ENCODE measurements at regions of chr2 and their contacts with region 1.

Region 1: GRCh38 chr2:221517696-221518151 is 54.4 kb downstream of the EPHA4 start:
- DNase-seq: peak; percentile 65 to 94 (median 71)
- H3K4me3 ChIP-seq: peak overlapping the region; percentile 47
- H3K4me3 Mint-ChIP-seq: no peak overlapping the region
- H3K27ac ChIP-seq: peak overlapping the region; percentile 97
- H3K27ac Mint-ChIP-seq: no peak overlapping the region
- H3K4me1 ChIP-seq: peaks cover 48% of the 10 kb centered on the region
- H3K4me1 Mint-ChIP-seq: peaks cover 20 to 30% (median 28%) of the 10 kb centered on the region in 3 donors
- H3K27me3 ChIP-seq: no peaks in the 10 kb centered on the region
- H3K27me3 Mint-ChIP-seq: no peaks in the 10 kb centered on the region

Region 2: DNA sequence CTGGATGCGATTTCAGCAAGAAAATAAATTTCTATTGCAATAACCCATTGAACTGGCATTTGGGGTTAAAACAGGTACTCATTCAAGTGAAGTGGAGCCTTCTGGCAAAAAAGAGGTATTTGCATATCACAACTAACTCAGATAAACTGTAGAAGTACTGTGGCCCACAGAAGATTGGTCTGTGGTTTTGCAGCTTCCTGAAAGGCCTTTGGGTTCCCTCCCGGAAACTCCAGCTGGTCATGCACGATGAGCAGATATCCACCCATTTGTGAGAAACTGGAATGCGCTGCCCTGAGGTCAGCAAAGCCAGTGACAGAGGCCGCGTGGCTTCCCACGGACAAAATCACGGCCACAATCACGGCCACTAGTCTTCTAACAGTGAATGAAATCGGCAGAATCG is 51.9 kb before region 1 on chr2:
- CTCF ChIA-PET with region 1: interaction called, 5 read pairs
- POLR2A ChIA-PET with region 1: interaction called, 10 read pairs
- DNase-seq: no peak
- H3K4me3 ChIP-seq: no peak overlapping the region
- H3K4me3 Mint-ChIP-seq: peak overlapping the region in 5 of 7 donors; percentile 10 to 49 (median 42)
- H3K27ac ChIP-seq: no peak overlapping the region
- H3K27ac Mint-ChIP-seq: peak overlapping the region in 7 of 8 donors; percentile 21 to 77 (median 31)
- H3K4me1 ChIP-seq: peaks cover 29% of the 10 kb centered on the region
- H3K4me1 Mint-ChIP-seq: peaks cover 55 to 91% (median 79%) of the 10 kb centered on the region in 3 donors
- H3K27me3 ChIP-seq: no peaks in the 10 kb centered on the region
- H3K27me3 Mint-ChIP-seq: peaks cover 0 to 5% of the 10 kb centered on the region in 2 donors